GM13976 (cell line): ENCODE measurements at regions of chr20 and their contacts with region 1.

Region 1: DNA sequence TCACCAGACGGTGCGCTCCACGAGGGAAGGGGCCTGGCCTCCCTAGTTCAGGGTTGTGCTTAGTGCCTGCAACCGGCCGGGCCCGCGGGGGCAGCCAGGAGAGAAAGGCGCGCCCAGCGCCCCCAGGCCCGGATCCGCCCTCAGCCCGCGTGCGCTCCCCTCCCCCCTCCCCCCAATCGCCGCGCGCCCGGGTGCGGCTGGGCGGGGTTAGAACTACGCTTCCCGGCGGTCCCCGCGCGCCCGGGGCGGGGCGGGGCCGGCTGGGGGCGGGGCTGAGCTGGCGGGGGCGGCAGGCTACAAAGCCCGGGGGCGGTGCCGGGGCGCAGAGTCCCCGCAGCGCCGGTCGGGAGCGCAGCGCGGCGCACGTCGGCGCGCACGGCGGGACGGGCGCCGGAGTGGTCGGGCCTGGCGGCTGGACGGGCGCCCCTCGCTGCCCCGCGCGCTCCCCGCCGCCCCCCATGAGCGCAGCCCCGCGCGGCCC is at the start of gene RBM38:
- DNase-seq: peak; percentile 97
- CTCF ChIP-seq: no peak

Region 2: GRCh38 chr20:57148263-57148662 is 242.9 kb before region 1 on chr20:
- in situ Hi-C with region 1: no loop called
- DNase-seq: no peak
- CTCF ChIP-seq: no peak

Region 3: DNA sequence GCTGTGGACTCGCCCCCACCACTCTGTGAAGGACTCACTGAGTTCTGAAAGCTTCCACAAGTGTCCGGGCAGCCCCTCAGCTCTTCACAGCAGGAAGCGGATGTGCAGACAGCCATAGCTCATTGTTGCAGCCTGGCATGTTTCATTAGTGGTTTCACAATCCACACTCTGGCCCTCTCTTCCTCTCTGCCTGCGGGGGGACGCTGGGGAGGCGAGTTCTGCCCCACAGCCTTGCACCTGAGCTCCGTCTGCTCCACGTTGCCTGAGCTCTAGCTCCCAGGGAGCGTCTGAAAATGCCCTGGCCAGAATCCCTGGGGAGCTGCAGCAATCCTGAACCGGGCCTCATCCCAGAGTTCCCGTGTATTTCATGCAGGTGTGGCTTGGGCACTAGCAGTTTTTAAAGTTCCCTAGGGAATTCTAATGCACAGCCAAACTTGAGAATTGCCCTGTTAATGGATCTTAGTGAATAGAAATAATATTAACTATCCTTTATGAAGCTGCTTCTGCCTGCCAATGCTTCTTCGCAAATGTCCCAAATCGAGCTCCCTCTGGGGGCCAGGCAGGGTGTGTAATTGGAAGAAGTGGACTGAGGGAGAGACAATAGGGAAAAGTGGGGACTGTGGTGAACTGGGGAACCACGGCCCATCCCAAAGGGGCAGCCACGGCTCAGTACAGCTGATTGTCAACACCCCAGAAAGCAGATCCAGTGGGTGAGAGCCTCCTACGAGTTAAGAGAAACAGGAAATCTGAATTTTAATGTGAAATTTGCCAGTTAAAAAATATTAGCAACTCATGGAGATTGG is 82.3 kb after region 1 on chr20:
- in situ Hi-C with region 1: loop called (anchors 10 kb)
- DNase-seq: peak; percentile 73
- CTCF ChIP-seq: peak; percentile 7

Region 4: DNA sequence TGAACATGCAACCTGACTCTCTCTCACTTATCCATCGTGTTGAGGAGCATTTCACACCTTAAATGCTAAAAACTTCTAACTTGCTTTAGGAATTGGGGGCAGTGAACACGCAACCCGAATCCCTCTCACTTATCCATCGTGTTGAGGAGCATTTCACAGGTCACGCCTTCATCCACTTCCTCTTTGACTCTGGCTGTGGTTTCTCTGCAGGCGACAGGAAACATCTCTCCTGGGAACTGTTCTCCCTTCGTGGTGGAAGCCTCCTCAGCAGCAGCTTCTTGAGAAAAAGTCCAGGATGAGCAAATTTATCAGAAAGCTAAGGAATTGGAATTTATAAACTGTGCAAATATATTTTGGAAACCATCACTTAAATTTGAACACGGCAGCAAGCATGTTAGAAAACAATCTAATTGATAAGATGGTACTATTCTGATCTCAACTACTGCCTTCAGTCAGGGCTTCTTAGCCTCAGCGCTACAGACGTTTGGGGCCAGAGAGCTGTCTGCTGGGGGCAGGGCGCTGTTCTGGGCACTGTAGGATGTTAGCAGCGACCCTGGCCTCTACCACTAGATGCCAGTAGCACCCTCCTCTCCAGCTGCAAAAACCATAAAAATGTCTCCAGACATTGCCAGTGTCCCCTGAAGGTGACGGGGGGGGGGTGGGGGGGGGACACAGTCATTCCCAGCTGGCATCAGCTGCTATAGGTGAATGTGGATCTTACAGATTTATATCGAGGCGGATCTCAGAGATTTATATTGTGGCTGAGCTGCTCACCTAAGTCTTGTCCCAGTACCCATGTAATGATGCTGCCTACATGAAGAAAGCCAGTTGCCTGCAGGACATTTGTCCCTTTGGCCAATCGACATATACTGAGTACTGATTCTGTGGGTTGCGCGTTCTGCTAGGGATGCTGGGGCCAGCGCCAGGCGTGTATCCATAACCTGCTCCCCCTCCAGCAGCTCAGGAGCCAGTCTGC is 107.6 kb after region 1 on chr20:
- in situ Hi-C with region 1: loop called (anchors 5 kb)
- DNase-seq: no peak
- CTCF ChIP-seq: peak; percentile 37

Region 5: GRCh38 chr20:57596998-57597939 is 206.2 kb after region 1 on chr20:
- in situ Hi-C with region 1: loop called (anchors 10 kb)
- DNase-seq: peak; percentile 93
- CTCF ChIP-seq: peak; percentile 94

Region 6: GRCh38 chr20:57654363-57654997 is 263.4 kb after region 1 on chr20:
- in situ Hi-C with region 1: no loop called
- DNase-seq: peak; percentile 92
- CTCF ChIP-seq: peak; percentile 84

Region 7: GRCh38 chr20:58179432-58180099 is 788.5 kb after region 1 on chr20:
- in situ Hi-C with region 1: loop called (anchors 25 kb)
- DNase-seq: peak; percentile 88
- CTCF ChIP-seq: peak; percentile 93